MCF 10A (cell line): ENCODE measurements at regions of chr3 and their contacts with region 1.

Region 1: GRCh38 chr3:72665701-72666443 is 182.4 kb downstream of the SHQ1 start:
- DNase-seq: peak; percentile 79
- H3K4me3 Mint-ChIP-seq: no peak overlapping the region
- H3K27ac Mint-ChIP-seq: no peak overlapping the region
- H3K4me1 Mint-ChIP-seq: peaks cover 21% of the 10 kb centered on the region
- H3K27me3 Mint-ChIP-seq: peaks cover 8% of the 10 kb centered on the region
- CTCF ChIP-seq: peak; percentile 67

Region 2: DNA sequence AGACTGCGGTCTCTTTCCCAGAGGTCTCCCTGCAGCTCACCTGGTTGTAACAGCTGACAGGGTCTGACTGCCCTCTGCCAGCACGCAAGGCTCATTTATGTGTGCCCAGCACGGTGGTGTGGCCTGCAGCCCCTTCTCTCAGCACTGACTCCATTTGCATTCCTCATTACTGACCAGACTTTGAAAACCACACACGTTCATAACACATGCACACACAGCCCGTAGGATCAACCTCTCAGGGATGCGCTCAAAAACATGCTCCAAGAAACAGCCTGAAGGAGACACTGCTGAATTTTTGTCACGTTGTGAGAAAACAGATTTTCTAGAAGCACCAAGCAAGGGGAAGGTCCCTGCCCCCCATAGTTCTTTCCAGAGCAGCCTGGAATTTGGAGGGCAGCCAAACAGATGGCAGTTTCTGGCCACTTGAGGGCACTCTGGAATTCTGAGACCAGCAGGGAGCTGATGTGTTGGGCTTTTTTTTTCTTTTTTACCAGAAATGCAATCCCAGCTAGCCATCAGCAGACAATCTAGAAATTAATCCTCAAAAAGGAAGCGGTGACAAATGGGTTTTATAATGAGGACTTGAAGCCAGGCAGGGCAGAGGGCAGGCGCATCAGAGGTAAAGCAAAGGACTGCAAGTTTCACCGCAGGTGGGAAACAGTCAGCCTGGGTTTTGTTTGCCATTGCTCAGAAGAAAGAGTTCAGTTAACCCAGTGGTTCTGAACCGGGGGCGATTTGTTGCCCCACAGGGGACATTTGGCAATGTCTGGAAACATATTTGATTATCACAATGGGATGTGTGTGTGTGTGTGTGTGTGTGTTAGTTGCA is 710.4 kb before region 1 on chr3:
- CTCF ChIA-PET with region 1: interaction called, 14 read pairs
- POLR2A ChIA-PET with region 1: no interaction called
- intact Hi-C with region 1: no loop called
- DNase-seq: peak; percentile 78
- H3K4me3 Mint-ChIP-seq: no peak overlapping the region
- H3K27ac Mint-ChIP-seq: no peak overlapping the region
- H3K4me1 Mint-ChIP-seq: no peaks in the 10 kb centered on the region
- H3K27me3 Mint-ChIP-seq: peaks cover 22% of the 10 kb centered on the region
- CTCF ChIP-seq: peak; percentile 56

Region 3: DNA sequence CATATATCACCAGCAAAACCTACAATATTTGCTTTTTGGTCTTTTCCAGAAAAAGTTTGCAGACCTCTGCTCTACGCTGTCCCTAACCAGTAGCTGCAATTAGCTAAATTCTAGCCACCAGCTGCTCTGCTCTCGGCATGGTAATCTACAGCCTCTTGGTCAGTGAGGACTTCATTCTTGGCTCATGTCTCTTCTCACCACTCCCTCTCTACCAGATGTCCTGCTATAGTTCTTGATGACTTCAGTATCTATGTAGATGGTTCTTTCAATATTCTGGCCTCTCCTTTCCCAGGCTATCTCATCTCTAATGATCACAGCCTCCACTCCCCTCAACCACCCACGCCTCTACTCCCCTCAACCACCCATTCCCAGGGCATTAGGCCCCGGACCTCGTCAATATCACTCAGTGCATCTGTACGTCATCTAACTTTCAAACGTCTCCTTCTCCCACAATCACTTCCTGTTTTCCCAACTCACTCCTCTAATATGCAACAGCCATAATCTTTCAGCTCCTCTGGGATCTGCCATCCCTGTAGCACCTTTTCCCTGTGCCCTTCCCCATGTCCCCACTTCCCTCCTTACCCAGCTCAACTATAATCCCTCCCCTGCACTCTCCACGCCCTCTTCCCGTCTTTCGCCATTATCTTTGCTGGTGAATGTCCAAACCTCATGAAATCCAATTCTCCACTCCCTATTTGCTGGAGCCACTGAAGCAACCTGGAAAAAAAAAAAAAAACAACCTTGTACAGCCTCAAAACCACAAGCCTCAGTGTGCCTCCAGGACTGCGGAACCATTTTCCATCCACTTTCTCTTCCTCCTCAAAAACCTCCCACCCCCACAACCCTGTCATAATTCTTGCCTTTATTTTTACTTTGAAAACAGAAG is 451.6 kb before region 1 on chr3:
- CTCF ChIA-PET with region 1: no interaction called
- POLR2A ChIA-PET with region 1: no interaction called
- intact Hi-C with region 1: no loop called
- DNase-seq: no peak
- H3K4me3 Mint-ChIP-seq: no peak overlapping the region
- H3K27ac Mint-ChIP-seq: no peak overlapping the region
- H3K4me1 Mint-ChIP-seq: no peaks in the 10 kb centered on the region
- H3K27me3 Mint-ChIP-seq: peaks cover 9% of the 10 kb centered on the region
- CTCF ChIP-seq: no peak

Region 4: GRCh38 chr3:72270072-72270681 is 395.7 kb before region 1 on chr3:
- CTCF ChIA-PET with region 1: no interaction called
- POLR2A ChIA-PET with region 1: no interaction called
- intact Hi-C with region 1: loop called (anchors 10 kb)
- DNase-seq: peak; percentile 93
- H3K4me3 Mint-ChIP-seq: peak overlapping the region; percentile 15
- H3K27ac Mint-ChIP-seq: peak overlapping the region; percentile 88
- H3K4me1 Mint-ChIP-seq: peaks cover 32% of the 10 kb centered on the region
- H3K27me3 Mint-ChIP-seq: peaks cover 7% of the 10 kb centered on the region
- CTCF ChIP-seq: no peak

Region 5: DNA sequence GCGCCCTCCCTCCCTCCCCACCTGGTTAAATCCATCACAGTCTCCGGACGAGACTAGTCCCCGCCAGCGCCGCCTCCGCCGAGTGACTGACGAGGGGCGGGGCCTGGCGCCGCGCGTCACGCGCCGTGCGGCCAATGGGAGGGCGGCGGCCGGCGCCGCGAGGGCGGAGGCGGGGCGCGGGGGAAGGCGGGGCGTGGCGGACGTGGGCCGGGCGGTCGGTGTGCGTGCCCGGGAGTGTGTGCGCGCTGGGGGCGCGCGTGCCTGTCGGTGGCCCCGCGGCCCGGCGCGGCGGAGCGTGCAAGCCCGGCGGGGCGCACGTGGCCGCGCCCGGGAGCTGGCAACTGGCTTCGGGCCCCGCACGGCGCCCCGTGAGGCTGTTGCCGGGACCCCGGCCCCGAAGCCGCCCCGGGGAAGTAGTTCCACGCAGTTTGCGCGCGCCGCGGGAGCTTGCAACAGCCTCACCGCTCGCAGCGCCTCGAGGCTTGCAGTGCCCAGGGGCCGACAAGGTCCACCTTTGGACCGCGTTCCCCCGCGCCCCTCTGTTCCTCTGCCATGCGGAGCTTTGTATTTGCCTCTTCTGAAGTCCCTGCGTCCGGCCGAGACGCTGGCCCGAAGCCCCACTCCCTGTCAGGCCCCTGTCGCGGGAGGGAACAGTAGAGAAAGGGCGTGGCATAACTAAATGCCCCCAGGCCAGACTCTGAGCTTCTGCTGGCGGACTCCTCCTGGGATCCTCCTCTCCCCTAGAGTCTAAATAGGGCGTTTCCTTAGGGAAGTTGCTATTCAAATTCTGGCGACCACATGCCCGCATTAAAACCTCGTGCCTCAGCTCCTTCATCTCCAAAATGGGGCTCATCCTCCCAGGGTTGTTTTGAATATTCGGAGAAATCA is 218.6 kb before region 1 on chr3:
- CTCF ChIA-PET with region 1: no interaction called
- POLR2A ChIA-PET with region 1: interaction called, 5 read pairs
- intact Hi-C with region 1: loop called (anchors 2 kb)
- DNase-seq: peak; percentile 87
- H3K4me3 Mint-ChIP-seq: peak overlapping the region; percentile 88
- H3K27ac Mint-ChIP-seq: no peak overlapping the region
- H3K4me1 Mint-ChIP-seq: peaks cover 33% of the 10 kb centered on the region
- H3K27me3 Mint-ChIP-seq: peaks cover 21% of the 10 kb centered on the region
- CTCF ChIP-seq: no peak

Region 6: GRCh38 chr3:72679540-72680198 is 13.8 kb after region 1 on chr3:
- CTCF ChIA-PET with region 1: interaction called, 13 read pairs
- POLR2A ChIA-PET with region 1: interaction called, 3 read pairs
- intact Hi-C with region 1: no loop called
- DNase-seq: no peak
- H3K4me3 Mint-ChIP-seq: no peak overlapping the region
- H3K27ac Mint-ChIP-seq: no peak overlapping the region
- H3K4me1 Mint-ChIP-seq: peaks cover 17% of the 10 kb centered on the region
- H3K27me3 Mint-ChIP-seq: no peaks in the 10 kb centered on the region
- CTCF ChIP-seq: no peak

Region 7: GRCh38 chr3:72753495-72753894 is 87.6 kb after region 1 on chr3:
- CTCF ChIA-PET with region 1: interaction called, 17 read pairs
- POLR2A ChIA-PET with region 1: no interaction called
- intact Hi-C with region 1: no loop called
- DNase-seq: no peak
- H3K4me3 Mint-ChIP-seq: no peak overlapping the region
- H3K27ac Mint-ChIP-seq: no peak overlapping the region
- H3K4me1 Mint-ChIP-seq: peaks cover 19% of the 10 kb centered on the region
- H3K27me3 Mint-ChIP-seq: no peaks in the 10 kb centered on the region
- CTCF ChIP-seq: no peak

Region 8: GRCh38 chr3:72811551-72811950 is 145.7 kb after region 1 on chr3:
- CTCF ChIA-PET with region 1: interaction called, 16 read pairs
- POLR2A ChIA-PET with region 1: no interaction called
- intact Hi-C with region 1: no loop called
- DNase-seq: no peak
- H3K4me3 Mint-ChIP-seq: no peak overlapping the region
- H3K27ac Mint-ChIP-seq: no peak overlapping the region
- H3K4me1 Mint-ChIP-seq: no peaks in the 10 kb centered on the region
- H3K27me3 Mint-ChIP-seq: no peaks in the 10 kb centered on the region
- CTCF ChIP-seq: no peak

Region 9: DNA sequence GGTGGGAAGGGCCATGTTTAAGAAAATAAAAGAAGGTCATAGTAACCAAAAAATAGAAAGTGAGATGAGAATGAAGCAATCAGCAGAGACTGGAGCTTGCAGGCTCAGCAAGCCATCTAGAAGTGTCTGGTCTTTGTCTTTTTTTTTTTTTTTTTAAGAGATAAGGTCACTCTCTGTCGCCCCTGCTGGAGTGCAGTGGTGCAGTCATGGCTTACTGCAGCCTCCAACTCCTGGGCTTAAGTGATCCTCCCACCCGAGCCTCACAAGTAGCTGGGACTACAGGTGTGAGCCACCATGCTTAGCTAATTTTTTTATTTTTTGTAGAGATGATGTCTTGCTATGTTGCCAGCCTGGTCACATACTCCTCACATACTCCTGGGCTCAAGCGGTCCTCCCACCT is 258.2 kb after region 1 on chr3:
- CTCF ChIA-PET with region 1: no interaction called
- POLR2A ChIA-PET with region 1: no interaction called
- intact Hi-C with region 1: no loop called
- DNase-seq: no peak
- H3K4me3 Mint-ChIP-seq: no peak overlapping the region
- H3K27ac Mint-ChIP-seq: no peak overlapping the region
- H3K4me1 Mint-ChIP-seq: no peaks in the 10 kb centered on the region
- H3K27me3 Mint-ChIP-seq: no peaks in the 10 kb centered on the region
- CTCF ChIP-seq: peak; percentile 9